ENCODE measurements at regions of chr15 and their contacts with region 1.

Region 1: GRCh38 chr15:90265271-90266060 is at the start of gene NGRN:
- DNase-seq: peak; percentile 87
- ATAC-seq: peak; percentile 85
- H3K4me3 Mint-ChIP-seq: peak within 1 kb of the TSS; percentile 95
- H3K27ac Mint-ChIP-seq: peak within 1 kb of the TSS; percentile 97
- H3K4me1 Mint-ChIP-seq: peaks cover 40% of the 10 kb centered on the region
- H3K27me3 Mint-ChIP-seq: no peaks in the 10 kb centered on the region
- CTCF ChIP-seq: no peak
- total RNA-seq, gene NGRN: 77.8 to 88.5 TPM (median 88.1 TPM) in 3 replicates

Region 2: DNA sequence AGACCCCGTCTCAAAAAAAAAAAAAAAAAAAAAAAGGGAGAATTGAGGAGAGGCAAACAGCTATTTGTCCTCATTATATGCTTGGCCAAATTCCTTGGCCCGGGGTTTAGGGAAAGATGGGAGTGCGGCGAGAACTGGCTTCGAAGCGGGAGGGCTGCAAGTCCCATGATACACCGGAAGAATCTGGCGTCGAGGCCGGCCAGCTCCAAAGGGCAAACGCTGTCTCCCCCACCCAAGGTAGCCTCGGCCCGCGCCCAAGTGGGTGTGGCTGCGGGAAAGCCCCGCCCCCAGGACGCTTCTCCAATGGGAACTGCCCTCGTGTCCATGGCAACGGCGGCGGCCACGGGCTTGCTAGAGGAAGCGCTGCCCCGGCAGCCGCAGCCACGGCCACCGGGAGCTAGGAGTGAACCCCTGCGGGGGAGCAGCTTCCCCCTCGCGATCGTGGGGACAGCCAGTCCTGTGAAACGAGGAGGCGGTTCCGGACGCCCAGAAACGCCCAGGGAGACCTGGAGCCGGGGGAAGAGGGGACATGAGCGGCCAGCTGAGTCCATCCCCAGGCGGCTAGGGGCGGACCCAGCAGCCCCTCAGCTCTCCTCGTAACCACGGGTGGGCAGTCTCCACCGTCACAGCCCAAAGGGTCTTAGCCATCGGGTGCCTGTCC is 16.1 kb before region 1 on chr15 and contains the start of gene TTLL13:
- CTCF ChIA-PET with region 1: interaction called, 10 read pairs
- POLR2A ChIA-PET with region 1: interaction called, 9 read pairs
- DNase-seq: peak; percentile 82
- ATAC-seq: peak; percentile 95
- H3K4me3 Mint-ChIP-seq: peak within 1 kb of the TSS; percentile 72
- H3K27ac Mint-ChIP-seq: no peak within 1 kb of the TSS; the same call in 1 of the 2 replicates
- H3K4me1 Mint-ChIP-seq: peaks cover 8% of the 10 kb centered on the region; the same call in 1 of the 2 replicates
- H3K27me3 Mint-ChIP-seq: peaks cover 16% of the 10 kb centered on the region
- CTCF ChIP-seq: no peak
- total RNA-seq, gene TTLL13: 0.18 to 0.76 TPM (median 0.48 TPM) in 3 replicates

Region 3: DNA sequence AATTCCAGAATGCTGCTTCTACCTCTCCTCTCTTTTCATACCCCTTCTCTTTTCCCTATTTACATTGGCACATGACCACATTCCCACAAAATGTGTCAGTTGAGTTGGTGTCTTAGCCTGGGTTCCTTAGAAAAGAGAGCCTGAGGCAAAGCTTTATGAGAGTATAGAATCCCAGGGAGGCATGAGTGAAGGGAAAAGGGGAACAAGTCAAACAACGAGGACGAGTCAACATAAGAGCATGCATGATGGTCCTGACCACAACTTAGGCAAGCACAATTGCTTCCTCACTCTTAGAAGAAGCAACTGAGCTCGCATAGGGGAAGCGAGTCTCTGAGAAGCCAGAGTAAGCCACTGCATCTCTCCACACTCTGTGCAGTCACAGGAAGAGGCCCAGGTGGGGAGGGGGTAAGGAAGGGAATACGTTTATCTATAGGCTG is 71.3 kb after region 1 on chr15:
- CTCF ChIA-PET with region 1: no interaction called
- POLR2A ChIA-PET with region 1: no interaction called
- DNase-seq: no peak
- ATAC-seq: no peak
- H3K4me3 Mint-ChIP-seq: no peak overlapping the region
- H3K27ac Mint-ChIP-seq: no peak overlapping the region
- H3K4me1 Mint-ChIP-seq: no peaks in the 10 kb centered on the region
- H3K27me3 Mint-ChIP-seq: no peaks in the 10 kb centered on the region
- CTCF ChIP-seq: no peak

Region 4: GRCh38 chr15:90436952-90437351 is 171.5 kb after region 1 on chr15:
- CTCF ChIA-PET with region 1: no interaction called
- POLR2A ChIA-PET with region 1: no interaction called
- DNase-seq: no peak
- ATAC-seq: no peak
- H3K4me3 Mint-ChIP-seq: no peak overlapping the region
- H3K27ac Mint-ChIP-seq: 0 out of 2 replicates have a peak overlapping the region, but pooled peaks have one; percentile 25
- H3K4me1 Mint-ChIP-seq: 0 out of 2 replicates have a peak, but pooled peaks cover 5% of the 10 kb centered on the region
- H3K27me3 Mint-ChIP-seq: no peaks in the 10 kb centered on the region
- CTCF ChIP-seq: no peak